H1 (cell line): ENCODE measurements at regions of chr10 and their contacts with region 1.

Region 1: GRCh38 chr10:49385939-49386922 is 9.7 kb downstream of the DRGX start:
- DNase-seq: no peak
- H3K4me3 ChIP-seq: no peak overlapping the region
- H3K27ac ChIP-seq: no peak overlapping the region
- H3K4me1 ChIP-seq: no peaks in the 10 kb centered on the region; a peak in 1 of 7 replicates
- H3K27me3 ChIP-seq: peaks cover 0 to 3% (median 1%) of the 10 kb centered on the region in 4 experiments; a peak in 1 of 7 replicates
- CTCF ChIP-seq: no peak
- EP300 ChIP-seq: no peak
- POLR2A ChIP-seq: no peak
- RAD21 ChIP-seq: no peak

Region 2: GRCh38 chr10:49369216-49370162 is 16.7 kb before region 1 on chr10:
- CTCF ChIA-PET with region 1: interaction called, 10 read pairs
- POLR2A ChIA-PET with region 1: no interaction called
- DNase-seq: no peak
- H3K4me3 ChIP-seq: no peak overlapping the region
- H3K27ac ChIP-seq: no peak overlapping the region
- H3K4me1 ChIP-seq: no peaks in the 10 kb centered on the region
- H3K27me3 ChIP-seq: no peaks in the 10 kb centered on the region; a peak in 1 of 7 replicates
- CTCF ChIP-seq: no peak
- EP300 ChIP-seq: no peak
- POLR2A ChIP-seq: no peak
- RAD21 ChIP-seq: no peak

Region 3: GRCh38 chr10:49398000-49398861 is 12.0 kb after region 1 on chr10:
- CTCF ChIA-PET with region 1: interaction called, 11 read pairs
- POLR2A ChIA-PET with region 1: no interaction called
- DNase-seq: peak in 1 of 2 experiments; percentile 88
- H3K4me3 ChIP-seq: peak overlapping the region; percentile 1 to 67 (median 41); a peak in 6 of 8 replicates
- H3K27ac ChIP-seq: no peak overlapping the region
- H3K4me1 ChIP-seq: peaks cover 4 to 14% (median 6%) of the 10 kb centered on the region in 4 experiments
- H3K27me3 ChIP-seq: peaks cover 48 to 85% (median 70%) of the 10 kb centered on the region in 4 experiments
- CTCF ChIP-seq: no peak; a peak in 1 of 4 replicates
- EP300 ChIP-seq: no peak
- POLR2A ChIP-seq: no peak
- RAD21 ChIP-seq: no peak

Region 4: DNA sequence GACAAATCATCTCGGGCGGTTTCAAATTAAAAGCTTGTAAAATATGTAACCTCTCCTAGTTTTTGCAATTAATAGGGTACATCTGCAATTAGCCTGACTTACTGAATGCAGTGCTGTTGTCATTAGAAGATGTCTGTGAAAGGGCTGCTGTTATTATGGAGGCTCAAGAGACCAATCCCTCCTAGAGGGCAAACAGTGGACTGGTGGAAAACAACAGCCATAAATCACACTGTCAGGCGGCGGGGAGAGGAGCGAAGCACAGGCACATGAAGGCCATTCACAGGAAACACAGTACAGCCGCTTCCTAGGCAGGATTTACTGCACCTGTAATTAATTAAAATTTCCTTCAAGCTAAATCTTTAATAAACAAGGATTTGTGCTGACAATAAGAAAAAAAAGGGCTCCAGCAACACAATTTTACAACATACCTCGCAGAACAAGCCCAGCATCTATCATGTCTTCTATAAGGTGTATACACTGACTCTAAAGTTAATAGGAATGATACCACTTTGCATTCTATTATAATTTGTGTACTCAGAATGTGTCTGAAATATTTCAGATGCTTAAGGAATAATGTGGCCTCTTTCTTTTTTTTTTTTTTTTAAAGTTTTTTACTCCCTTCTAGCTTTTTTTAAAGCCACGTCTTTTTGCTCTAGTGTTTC is 102.0 kb after region 1 on chr10:
- CTCF ChIA-PET with region 1: no interaction called
- POLR2A ChIA-PET with region 1: no interaction called
- DNase-seq: no peak
- H3K4me3 ChIP-seq: no peak overlapping the region
- H3K27ac ChIP-seq: no peak overlapping the region
- H3K4me1 ChIP-seq: no peaks in the 10 kb centered on the region
- H3K27me3 ChIP-seq: no peaks in the 10 kb centered on the region
- CTCF ChIP-seq: no peak
- EP300 ChIP-seq: no peak
- POLR2A ChIP-seq: no peak
- RAD21 ChIP-seq: no peak